ENCODE measurements at regions of chr6 and their contacts with region 1.

Region 1: GRCh38 chr6:41787219-41787917 is at the start of gene TOMM6:
- DNase-seq: peak in 1 of 2 donors; percentile 93
- H3K4me3 ChIP-seq: peak within 1 kb of the TSS; percentile 84 to 92
- H3K27ac ChIP-seq: peak within 1 kb of the TSS; percentile 95
- H3K4me1 ChIP-seq: peaks cover 51% of the 10 kb centered on the region
- H3K27me3 ChIP-seq: no peaks in the 10 kb centered on the region
- CTCF ChIP-seq: peak; percentile 50 to 97 (median 88)
- POLR2A ChIP-seq: peak in 1 of 2 donors; percentile 84
- total RNA-seq, gene TOMM6: 105 TPM

Region 2: GRCh38 chr6:41920921-41921711 is 133.7 kb after region 1 on chr6 and contains the starts of genes BYSL and MED20:
- intact Hi-C with region 1: loop called (anchors 2 kb)
- DNase-seq: peak in 1 of 2 donors; percentile 94
- H3K4me3 ChIP-seq: peak within 1 kb of the TSS; percentile 86 to 97
- H3K27ac ChIP-seq: peak within 1 kb of the TSS; percentile 90
- H3K4me1 ChIP-seq: peaks cover 49% of the 10 kb centered on the region
- H3K27me3 ChIP-seq: no peaks in the 10 kb centered on the region
- CTCF ChIP-seq: peak; percentile 72 to 100 (median 95)
- POLR2A ChIP-seq: peak in 1 of 2 donors; percentile 63
- total RNA-seq, gene BYSL: 16.0 TPM
- total RNA-seq, gene MED20: 9.6 TPM

Measured in vagina (tissue), 2 donors.